CD4-positive, alpha-beta memory T cell (primary cell): ENCODE measurements at regions of chr1 and their contacts with region 1.

Region 1: GRCh38 chr1:23867953-23868556 is at the start of gene FUCA1:
- DNase-seq: peak; percentile 94 to 96 (median 96)
- H3K4me3 ChIP-seq: peak within 1 kb of the TSS in 1 of 2 donors; percentile 77
- H3K4me3 Mint-ChIP-seq: peak within 1 kb of the TSS; percentile 82 to 92 (median 88)
- H3K27ac ChIP-seq: peak within 1 kb of the TSS; percentile 63
- H3K27ac Mint-ChIP-seq: peak within 1 kb of the TSS; percentile 68 to 95 (median 90)
- H3K4me1 ChIP-seq: peaks cover 24% of the 10 kb centered on the region
- H3K4me1 Mint-ChIP-seq: peaks cover 15 to 24% (median 19%) of the 10 kb centered on the region in 4 donors
- H3K27me3 ChIP-seq: no peaks in the 10 kb centered on the region
- H3K27me3 Mint-ChIP-seq: no peaks in the 10 kb centered on the region
- total RNA-seq, gene FUCA1: 32.7 to 35.0 TPM

Region 2: GRCh38 chr1:23691499-23692307 is 176.4 kb before region 1 on chr1 and contains the start of gene RPL11:
- CTCF ChIA-PET with region 1: no interaction called
- POLR2A ChIA-PET with region 1: no interaction called
- intact Hi-C with region 1: loop called (anchors 1 kb)
- DNase-seq: peak; percentile 85 to 92 (median 90)
- H3K4me3 ChIP-seq: peak within 1 kb of the TSS; percentile 37 to 93
- H3K4me3 Mint-ChIP-seq: peak within 1 kb of the TSS; percentile 93 to 99 (median 96)
- H3K27ac ChIP-seq: peak within 1 kb of the TSS; percentile 91
- H3K27ac Mint-ChIP-seq: peak within 1 kb of the TSS; percentile 87 to 98 (median 95)
- H3K4me1 ChIP-seq: peaks cover 47% of the 10 kb centered on the region
- H3K4me1 Mint-ChIP-seq: peaks cover 42 to 53% (median 45%) of the 10 kb centered on the region in 4 donors
- H3K27me3 ChIP-seq: no peaks in the 10 kb centered on the region
- H3K27me3 Mint-ChIP-seq: no peaks in the 10 kb centered on the region
- total RNA-seq, gene RPL11: 1,919 to 2,088 TPM

Region 3: GRCh38 chr1:23800400-23801337 is 67.4 kb before region 1 on chr1 and contains the start of gene GALE:
- CTCF ChIA-PET with region 1: interaction called, 3 read pairs
- POLR2A ChIA-PET with region 1: interaction called, 3 read pairs
- intact Hi-C with region 1: loop called (anchors 2 kb)
- DNase-seq: peak; percentile 94 to 97 (median 94)
- H3K4me3 ChIP-seq: peak within 1 kb of the TSS; percentile 70 to 88
- H3K4me3 Mint-ChIP-seq: peak within 1 kb of the TSS; percentile 80 to 98 (median 92)
- H3K27ac ChIP-seq: peak within 1 kb of the TSS; percentile 92
- H3K27ac Mint-ChIP-seq: peak within 1 kb of the TSS; percentile 84 to 97 (median 94)
- H3K4me1 ChIP-seq: peaks cover 23% of the 10 kb centered on the region
- H3K4me1 Mint-ChIP-seq: peaks cover 8 to 37% (median 21%) of the 10 kb centered on the region in 4 donors
- H3K27me3 ChIP-seq: no peaks in the 10 kb centered on the region
- H3K27me3 Mint-ChIP-seq: no peaks in the 10 kb centered on the region
- total RNA-seq, gene GALE: 11.2 to 12.0 TPM

Region 4: GRCh38 chr1:23825076-23825761 is 42.8 kb before region 1 on chr1 and contains the start of gene HMGCL:
- CTCF ChIA-PET with region 1: interaction called, 3 read pairs
- POLR2A ChIA-PET with region 1: no interaction called
- intact Hi-C with region 1: loop called (anchors 1 kb)
- DNase-seq: peak; percentile 80 to 89 (median 82)
- H3K4me3 ChIP-seq: peak within 1 kb of the TSS; percentile 48 to 98
- H3K4me3 Mint-ChIP-seq: peak within 1 kb of the TSS; percentile 92 to 97 (median 94)
- H3K27ac ChIP-seq: peak within 1 kb of the TSS; percentile 80
- H3K27ac Mint-ChIP-seq: peak within 1 kb of the TSS; percentile 86 to 98 (median 96)
- H3K4me1 ChIP-seq: peaks cover 18% of the 10 kb centered on the region
- H3K4me1 Mint-ChIP-seq: peaks cover 15 to 28% (median 20%) of the 10 kb centered on the region in 4 donors
- H3K27me3 ChIP-seq: no peaks in the 10 kb centered on the region
- H3K27me3 Mint-ChIP-seq: no peaks in the 10 kb centered on the region
- total RNA-seq, gene HMGCL: 36.3 to 38.5 TPM

Region 5: GRCh38 chr1:23959041-23959460 is 91.0 kb after region 1 on chr1:
- CTCF ChIA-PET with region 1: no interaction called
- POLR2A ChIA-PET with region 1: no interaction called
- intact Hi-C with region 1: loop called (anchors 5 kb)
- DNase-seq: peak; percentile 90 to 97 (median 94)
- H3K4me3 ChIP-seq: peak overlapping the region; percentile 66 to 99
- H3K4me3 Mint-ChIP-seq: peak overlapping the region; percentile 99 to 100 (median 100)
- H3K27ac ChIP-seq: peak overlapping the region; percentile 95
- H3K27ac Mint-ChIP-seq: peak overlapping the region; percentile 98 to 100 (median 100)
- H3K4me1 ChIP-seq: peaks cover 41% of the 10 kb centered on the region
- H3K4me1 Mint-ChIP-seq: peaks cover 26 to 70% (median 49%) of the 10 kb centered on the region in 4 donors
- H3K27me3 ChIP-seq: no peaks in the 10 kb centered on the region
- H3K27me3 Mint-ChIP-seq: no peaks in the 10 kb centered on the region

Region 6: GRCh38 chr1:24266398-24266941 is 398.4 kb after region 1 on chr1:
- CTCF ChIA-PET with region 1: no interaction called
- POLR2A ChIA-PET with region 1: no interaction called
- intact Hi-C with region 1: no loop called
- DNase-seq: no peak
- H3K4me3 ChIP-seq: no peak overlapping the region
- H3K4me3 Mint-ChIP-seq: no peak overlapping the region
- H3K27ac ChIP-seq: no peak overlapping the region
- H3K27ac Mint-ChIP-seq: no peak overlapping the region
- H3K4me1 ChIP-seq: no peaks in the 10 kb centered on the region
- H3K4me1 Mint-ChIP-seq: no peaks in the 10 kb centered on the region
- H3K27me3 ChIP-seq: no peaks in the 10 kb centered on the region
- H3K27me3 Mint-ChIP-seq: peaks cover 9 to 15% of the 10 kb centered on the region in 2 donors